Activated T-helper 1 cell treated with anti-CD3 and anti-CD28 coated beads, Interleukin-12 subunit alpha, Interleukin-12 subunit beta, Interleukin-2, Interleukin-4 antibody, amounts not matched to agents 30 ng/mL and 10 ng/mL and 1 ng/mL, durations not matched to agents 14 hours and 24 hours and 36 hours (primary cell): ENCODE measurements at regions of chr5 and their contacts with region 1.

Region 1: GRCh38 chr5:112848116-112848811 is 12.8 kb upstream of the SRP19 start:
- DNase-seq: peak; percentile 4
- H3K4me3 Mint-ChIP-seq: no peak overlapping the region
- H3K27ac Mint-ChIP-seq: no peak overlapping the region
- H3K4me1 Mint-ChIP-seq: peaks cover 5% of the 10 kb centered on the region
- H3K27me3 Mint-ChIP-seq: peaks cover 10% of the 10 kb centered on the region

Region 2: DNA sequence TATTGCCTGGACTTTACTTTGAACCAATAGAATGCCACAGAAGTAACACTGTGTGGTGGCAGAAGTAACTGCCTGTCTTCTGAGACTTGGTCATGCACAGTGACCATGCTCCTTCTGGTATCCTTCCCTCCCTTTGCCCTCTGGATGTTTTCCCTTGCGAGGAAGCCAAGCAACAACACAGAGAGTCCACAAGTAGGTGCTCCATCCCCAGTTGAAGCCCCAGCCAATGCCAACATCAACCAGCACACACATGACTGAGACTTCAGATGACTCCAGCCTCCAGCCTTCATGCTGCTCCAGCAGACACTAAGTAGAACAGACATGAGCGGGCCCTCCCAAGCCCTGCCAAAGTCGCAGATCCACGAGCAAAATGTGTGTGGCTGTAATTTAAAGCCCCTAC is 558.8 kb before region 1 on chr5:
- intact Hi-C with region 1: no loop called
- DNase-seq: no peak
- H3K4me3 Mint-ChIP-seq: no peak overlapping the region
- H3K27ac Mint-ChIP-seq: no peak overlapping the region
- H3K4me1 Mint-ChIP-seq: no peaks in the 10 kb centered on the region
- H3K27me3 Mint-ChIP-seq: no peaks in the 10 kb centered on the region

Region 3: DNA sequence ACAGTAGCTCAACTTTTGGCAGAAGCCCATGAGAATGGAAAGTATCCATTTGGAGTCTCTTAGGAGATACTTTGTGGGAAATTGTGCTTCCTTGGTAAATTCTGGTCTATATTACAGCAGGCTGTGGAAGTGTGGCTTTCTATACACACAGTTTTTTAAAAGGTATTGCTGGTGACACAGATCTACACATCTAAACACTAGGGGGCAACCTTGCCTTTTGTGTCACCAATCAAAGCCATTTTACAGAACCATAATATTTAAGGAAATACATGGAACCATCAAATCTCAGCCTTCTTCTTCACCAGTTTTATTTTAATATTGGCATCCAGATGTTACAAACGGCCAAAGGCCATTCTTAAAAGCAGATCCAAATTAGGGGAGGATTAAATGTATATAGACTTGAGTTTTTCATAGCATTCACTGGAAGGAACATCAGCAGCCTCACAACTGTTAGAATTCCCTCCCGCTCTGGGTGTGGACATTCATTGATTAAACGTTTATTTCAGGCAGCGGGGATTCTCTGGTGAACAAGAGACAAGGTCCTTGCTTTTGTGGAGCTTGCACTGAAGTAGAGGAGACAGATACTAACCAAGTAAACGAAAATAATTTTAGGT is 296.7 kb before region 1 on chr5:
- intact Hi-C with region 1: loop called (anchors 2 kb)
- DNase-seq: peak; percentile 14
- H3K4me3 Mint-ChIP-seq: no peak overlapping the region
- H3K27ac Mint-ChIP-seq: no peak overlapping the region
- H3K4me1 Mint-ChIP-seq: no peaks in the 10 kb centered on the region
- H3K27me3 Mint-ChIP-seq: peaks cover 15% of the 10 kb centered on the region

Region 4: DNA sequence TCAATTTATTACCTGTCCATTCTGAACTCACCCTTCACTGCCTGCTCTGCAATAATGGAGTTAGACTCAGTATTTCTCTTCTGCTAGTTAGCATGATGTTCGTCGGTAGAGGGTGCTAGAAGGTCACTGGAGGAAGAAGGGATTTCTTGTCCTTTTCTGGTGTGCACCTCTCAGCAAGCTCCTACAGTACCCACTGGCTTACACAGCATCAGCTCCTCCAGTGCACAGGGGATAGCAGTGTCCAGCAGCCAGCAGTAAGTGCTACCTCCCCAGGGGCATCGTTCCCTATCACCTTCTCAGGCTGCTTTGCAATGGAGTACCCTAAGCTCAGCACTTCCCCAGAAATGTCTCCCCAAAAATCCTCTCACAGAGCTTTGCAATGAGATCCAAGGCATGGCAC is 156.5 kb before region 1 on chr5:
- intact Hi-C with region 1: loop called (anchors 5 kb)
- DNase-seq: peak; percentile 13
- H3K4me3 Mint-ChIP-seq: no peak overlapping the region
- H3K27ac Mint-ChIP-seq: no peak overlapping the region
- H3K4me1 Mint-ChIP-seq: no peaks in the 10 kb centered on the region
- H3K27me3 Mint-ChIP-seq: peaks cover 36% of the 10 kb centered on the region

Region 5: DNA sequence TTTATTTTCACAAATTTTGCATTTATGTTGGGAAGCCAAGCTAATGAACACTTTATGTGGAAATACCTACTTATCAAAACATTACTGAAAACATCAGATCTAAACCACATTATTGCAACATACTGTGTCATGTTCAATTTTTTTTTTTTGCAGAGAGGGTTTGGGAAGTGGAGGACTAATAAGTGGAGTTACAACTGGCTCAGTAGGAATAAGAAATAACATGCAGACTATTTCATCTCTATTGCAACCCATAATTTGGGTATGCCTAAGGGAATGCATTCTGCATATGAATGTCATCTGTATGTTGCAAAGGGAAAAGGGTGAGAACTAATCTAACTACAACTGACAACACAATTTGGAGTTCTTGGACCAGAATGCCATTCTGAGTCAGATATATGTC is 68.7 kb before region 1 on chr5:
- intact Hi-C with region 1: no loop called
- DNase-seq: no peak
- H3K4me3 Mint-ChIP-seq: no peak overlapping the region
- H3K27ac Mint-ChIP-seq: no peak overlapping the region
- H3K4me1 Mint-ChIP-seq: no peaks in the 10 kb centered on the region
- H3K27me3 Mint-ChIP-seq: no peaks in the 10 kb centered on the region

Region 6: DNA sequence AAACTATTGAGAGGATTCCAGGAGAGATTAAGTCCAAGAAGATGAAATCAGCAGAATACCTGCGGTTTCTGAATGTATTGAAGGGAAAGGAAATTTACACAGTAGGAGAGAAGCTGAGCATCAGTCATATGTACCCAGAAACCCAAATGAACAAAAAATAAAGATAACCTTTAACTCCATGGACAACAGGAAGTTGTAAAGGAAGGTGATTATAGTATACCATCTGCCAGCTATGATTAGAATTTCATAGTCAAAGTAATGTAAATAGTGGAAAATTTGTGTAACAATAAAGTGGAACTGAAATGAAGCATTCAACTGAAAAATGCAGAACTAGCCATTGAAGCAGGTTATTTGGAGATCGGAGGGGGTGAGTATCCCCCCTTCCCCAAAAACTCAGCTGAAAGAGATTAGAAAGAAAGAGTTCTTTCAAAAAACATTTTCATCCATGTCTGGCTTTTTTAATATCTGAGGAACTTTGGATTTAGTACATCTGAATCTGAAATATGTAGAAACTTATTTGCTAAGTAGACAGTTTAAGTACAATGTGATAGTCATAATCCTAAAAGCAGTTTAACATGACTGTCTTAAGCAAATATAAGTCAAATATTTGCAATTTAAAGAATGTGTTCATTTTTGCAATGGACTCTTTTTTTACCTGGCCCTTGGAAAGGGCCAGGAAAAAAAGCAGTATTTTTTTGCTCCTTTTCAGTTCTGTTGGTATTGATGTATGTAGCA is 52.2 kb before region 1 on chr5:
- intact Hi-C with region 1: no loop called
- DNase-seq: no peak
- H3K4me3 Mint-ChIP-seq: no peak overlapping the region
- H3K27ac Mint-ChIP-seq: no peak overlapping the region
- H3K4me1 Mint-ChIP-seq: no peaks in the 10 kb centered on the region
- H3K27me3 Mint-ChIP-seq: no peaks in the 10 kb centered on the region